ENCODE measurements at regions of chr4 and their contacts with region 1.

Region 1: GRCh38 chr4:122914292-122914904 is 8.0 kb downstream of the NUDT6 start:
- DNase-seq: peak; percentile 77
- H3K4me3 ChIP-seq: no peak overlapping the region
- H3K27ac ChIP-seq: no peak overlapping the region
- H3K4me1 ChIP-seq: peaks cover 4% of the 10 kb centered on the region
- H3K27me3 ChIP-seq: no peaks in the 10 kb centered on the region
- CTCF ChIP-seq: peak; percentile 27 to 30
- POLR2A ChIP-seq: no peak

Region 2: DNA sequence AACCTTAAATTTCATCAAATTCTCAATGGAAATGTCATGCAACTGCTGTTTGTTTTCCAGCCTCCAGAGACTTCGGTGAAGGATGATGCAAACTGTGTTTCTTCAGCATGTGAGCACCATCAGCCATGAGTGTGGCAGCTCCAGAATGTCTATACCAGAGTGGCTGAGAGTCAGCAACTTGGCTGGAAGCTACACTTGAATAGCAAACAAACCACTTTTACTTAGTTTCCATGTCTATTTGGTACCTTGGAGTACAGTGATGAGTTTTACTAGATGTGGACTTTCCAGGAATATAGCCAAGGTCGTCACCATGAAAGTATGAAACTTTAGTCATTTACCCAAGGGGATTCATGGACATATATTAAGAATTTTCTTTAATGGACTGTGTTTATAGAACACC is 289.2 kb before region 1 on chr4:
- CTCF ChIA-PET with region 1: no interaction called
- POLR2A ChIA-PET with region 1: no interaction called
- dilution Hi-C with region 1: no loop called
- intact Hi-C with region 1: no loop called
- DNase-seq: no peak
- H3K4me3 ChIP-seq: no peak overlapping the region
- H3K27ac ChIP-seq: no peak overlapping the region
- H3K4me1 ChIP-seq: no peaks in the 10 kb centered on the region
- H3K27me3 ChIP-seq: peaks cover 14 to 18% of the 10 kb centered on the region in 2 experiments
- CTCF ChIP-seq: no peak
- POLR2A ChIP-seq: no peak

Region 3: GRCh38 chr4:122732329-122733026 is 181.9 kb before region 1 on chr4 and contains the start of gene BBS12:
- CTCF ChIA-PET with region 1: interaction called, 19 read pairs
- POLR2A ChIA-PET with region 1: no interaction called
- dilution Hi-C with region 1: no loop called
- intact Hi-C with region 1: loop called (anchors 1 kb)
- DNase-seq: peak; percentile 100
- H3K4me3 ChIP-seq: peak within 1 kb of the TSS; percentile 62 to 84 (median 82)
- H3K27ac ChIP-seq: peak within 1 kb of the TSS; percentile 83
- H3K4me1 ChIP-seq: peaks cover 7% of the 10 kb centered on the region
- H3K27me3 ChIP-seq: no peaks in the 10 kb centered on the region
- CTCF ChIP-seq: peak; percentile 34 to 62
- POLR2A ChIP-seq: no peak
- total RNA-seq, gene BBS12: 2.1 and 2.3 TPM in 2 replicates

Region 4: DNA sequence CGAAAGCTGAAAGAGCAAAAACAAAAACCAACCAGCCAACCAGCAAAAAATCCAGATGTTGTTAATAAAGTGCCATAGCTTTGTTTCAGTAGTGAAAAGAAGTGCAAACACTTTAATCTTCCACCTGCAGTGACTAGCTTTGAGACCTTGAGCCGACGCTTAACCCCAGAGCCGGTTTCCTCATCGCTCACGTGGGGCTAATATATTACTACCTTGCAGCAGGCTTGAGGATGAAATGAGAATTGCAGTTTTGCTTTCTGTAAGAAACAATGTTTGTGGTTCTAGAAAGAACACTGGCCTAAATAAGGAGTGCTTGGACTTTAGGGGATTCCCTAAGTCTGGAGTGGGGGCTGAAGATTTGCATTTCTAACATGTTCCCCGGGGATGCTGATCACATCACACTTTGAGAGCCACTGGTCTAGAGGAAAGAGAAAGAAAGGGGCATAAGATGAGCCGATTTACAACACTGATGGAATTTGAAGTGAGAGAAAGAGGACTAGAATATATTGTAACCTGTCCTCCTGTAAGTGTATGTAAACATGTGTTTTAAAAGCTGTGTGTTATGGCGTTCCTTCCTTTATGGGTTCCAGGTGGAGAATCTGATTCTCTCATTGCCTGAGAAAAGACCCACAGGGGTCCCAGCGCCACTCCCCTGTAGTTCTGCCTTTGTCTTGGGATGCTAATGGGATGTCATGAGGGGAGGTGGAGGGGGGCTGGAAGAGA is 86.4 kb before region 1 on chr4:
- CTCF ChIA-PET with region 1: interaction called, 12 read pairs
- POLR2A ChIA-PET with region 1: no interaction called
- dilution Hi-C with region 1: no loop called
- intact Hi-C with region 1: loop called (anchors 1 kb)
- DNase-seq: peak; percentile 71
- H3K4me3 ChIP-seq: peak overlapping the region; percentile 74 to 86 (median 75)
- H3K27ac ChIP-seq: peak overlapping the region; percentile 2
- H3K4me1 ChIP-seq: peaks cover 8% of the 10 kb centered on the region
- H3K27me3 ChIP-seq: no peaks in the 10 kb centered on the region
- CTCF ChIP-seq: no peak
- POLR2A ChIP-seq: no peak

Region 5: DNA sequence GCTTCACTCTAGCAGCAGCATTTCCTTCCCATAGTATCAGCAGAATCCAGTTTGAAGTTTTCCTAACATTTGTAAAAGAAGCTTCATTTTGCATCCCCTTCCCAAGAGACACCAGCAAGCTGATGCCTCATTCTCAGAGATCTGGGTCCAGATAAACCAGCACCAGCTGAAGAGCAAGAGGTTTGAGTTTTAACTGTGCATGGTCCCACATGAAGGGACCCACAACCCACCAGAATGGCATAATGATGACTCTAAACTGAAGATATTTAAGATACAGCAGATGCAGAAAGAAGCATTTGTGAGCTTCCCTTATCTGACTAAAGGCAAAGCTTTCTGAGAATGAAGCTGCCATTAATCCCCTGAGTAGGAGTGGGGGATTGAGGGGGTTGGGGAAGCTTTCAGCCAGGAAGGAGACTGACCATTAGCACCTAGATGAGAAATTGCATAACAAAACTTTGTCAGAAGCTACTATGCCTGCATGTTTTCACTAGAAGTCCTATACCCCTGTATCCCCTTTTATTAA is 10.6 kb before region 1 on chr4:
- CTCF ChIA-PET with region 1: interaction called, 26 read pairs
- POLR2A ChIA-PET with region 1: no interaction called
- dilution Hi-C with region 1: no loop called
- intact Hi-C with region 1: no loop called
- DNase-seq: no peak
- H3K4me3 ChIP-seq: no peak overlapping the region
- H3K27ac ChIP-seq: no peak overlapping the region
- H3K4me1 ChIP-seq: peaks cover under 1% of the 10 kb centered on the region
- H3K27me3 ChIP-seq: no peaks in the 10 kb centered on the region
- CTCF ChIP-seq: no peak
- POLR2A ChIP-seq: no peak